K562 (cell line): ENCODE measurements at regions of chr17 and their contacts with region 1.

Region 1: GRCh38 chr17:42798383-42799380 is at the starts of genes CNTD1 and COA3:
- DNase-seq: peak; percentile 87 to 91 (median 90)
- ATAC-seq: peak; percentile 98
- H3K4me3 ChIP-seq: peak within 1 kb of the TSS; percentile 73
- H3K27ac ChIP-seq: peak within 1 kb of the TSS; percentile 68
- H3K4me1 ChIP-seq: peaks cover 23 to 36% of the 10 kb centered on the region in 2 experiments
- H3K27me3 ChIP-seq: no peaks in the 10 kb centered on the region
- CTCF ChIP-seq: no peak
- EP300 ChIP-seq: no peak
- POLR2A ChIP-seq: peak; percentile 80
- RAD21 ChIP-seq: no peak
- polyA plus RNA-seq, gene CNTD1: 0.74 to 0.86 TPM
- polyA plus RNA-seq, gene COA3: 113 to 153 TPM

Region 2: DNA sequence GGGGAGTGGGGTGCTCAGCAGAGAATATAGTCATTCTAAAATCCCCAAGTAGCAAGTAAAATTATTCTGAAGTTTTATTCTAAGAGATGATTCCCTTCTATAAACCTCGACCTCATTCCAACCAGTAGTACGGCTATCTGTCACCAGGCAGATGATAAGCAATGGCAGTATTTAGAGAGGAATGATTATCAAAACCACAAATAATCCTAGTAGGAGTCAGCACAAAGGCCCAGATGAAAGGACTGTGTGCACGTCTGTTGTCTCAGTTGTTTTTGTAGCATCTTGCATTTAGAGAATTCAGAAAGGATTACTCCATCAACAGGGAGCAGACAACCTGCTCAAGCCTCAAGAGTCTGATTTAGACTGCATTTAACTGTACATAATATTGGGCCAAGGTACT is 75.0 kb before region 1 on chr17:
- CTCF ChIA-PET with region 1: no interaction called
- POLR2A ChIA-PET with region 1: no interaction called
- in situ Hi-C with region 1: no loop called
- intact Hi-C with region 1: no loop called
- DNase-seq: no peak
- ATAC-seq: no peak
- H3K4me3 ChIP-seq: no peak overlapping the region
- H3K27ac ChIP-seq: no peak overlapping the region
- H3K4me1 ChIP-seq: no peaks in the 10 kb centered on the region
- H3K27me3 ChIP-seq: no peaks in the 10 kb centered on the region
- CTCF ChIP-seq: no peak
- EP300 ChIP-seq: no peak
- POLR2A ChIP-seq: no peak
- RAD21 ChIP-seq: no peak

Region 3: GRCh38 chr17:42779936-42780850 is 18.5 kb before region 1 on chr17 and contains the start of gene WNK4:
- CTCF ChIA-PET with region 1: no interaction called
- POLR2A ChIA-PET with region 1: interaction called, 47 read pairs
- in situ Hi-C with region 1: no loop called
- intact Hi-C with region 1: no loop called
- DNase-seq: peak; percentile 93 to 98 (median 96)
- ATAC-seq: peak; percentile 89
- H3K4me3 ChIP-seq: peak within 1 kb of the TSS; percentile 53
- H3K27ac ChIP-seq: peak within 1 kb of the TSS; percentile 85
- H3K4me1 ChIP-seq: peaks cover 51 to 76% of the 10 kb centered on the region in 2 experiments
- H3K27me3 ChIP-seq: no peaks in the 10 kb centered on the region
- CTCF ChIP-seq: peak in 1 of 3 experiments; percentile 19; a peak in 1 of 6 replicates
- EP300 ChIP-seq: peak; percentile 94
- POLR2A ChIP-seq: peak; percentile 81
- RAD21 ChIP-seq: peak in 1 of 2 experiments; percentile 30; a peak in 1 of 4 replicates
- polyA plus RNA-seq, gene WNK4: 0.32 to 0.38 TPM

Region 4: DNA sequence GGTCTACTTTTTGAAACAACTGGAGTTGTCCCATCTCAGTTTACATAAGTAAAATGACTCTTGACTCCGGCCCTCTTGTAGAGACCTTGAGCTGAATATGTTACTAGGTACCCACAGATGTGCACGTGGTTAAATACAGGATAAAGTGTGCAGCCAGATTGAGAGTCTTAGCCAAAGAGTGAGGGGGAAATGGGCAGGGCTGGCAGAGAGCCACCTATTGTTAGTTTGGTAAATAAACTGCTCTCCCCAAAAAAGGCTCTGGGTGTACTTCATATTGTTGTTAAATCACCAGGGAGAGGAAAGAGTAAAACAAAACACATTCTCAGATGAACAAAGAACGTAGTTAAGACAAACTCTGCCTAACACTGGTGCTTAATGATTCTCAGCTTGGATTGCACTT is 122.2 kb after region 1 on chr17:
- CTCF ChIA-PET with region 1: no interaction called
- POLR2A ChIA-PET with region 1: no interaction called
- in situ Hi-C with region 1: no loop called
- intact Hi-C with region 1: no loop called
- DNase-seq: no peak
- ATAC-seq: no peak
- H3K4me3 ChIP-seq: no peak overlapping the region
- H3K27ac ChIP-seq: no peak overlapping the region
- H3K4me1 ChIP-seq: no peaks in the 10 kb centered on the region; a peak in 1 of 5 replicates
- H3K27me3 ChIP-seq: no peaks in the 10 kb centered on the region
- CTCF ChIP-seq: no peak
- EP300 ChIP-seq: no peak
- POLR2A ChIP-seq: no peak
- RAD21 ChIP-seq: no peak